Activated naive CD4-positive, alpha-beta T cell treated with anti-CD3 and anti-CD28 coated beads for 36 hours (primary cell): ENCODE measurements at regions of chr7 and their contacts with region 1.

Region 1: GRCh38 chr7:158655931-158656441 is 48.6 kb downstream of the NCAPG2 start:
- DNase-seq: peak; percentile 90
- H3K4me3 Mint-ChIP-seq: no peak overlapping the region
- H3K27ac Mint-ChIP-seq: peak overlapping the region; percentile 84
- H3K4me1 Mint-ChIP-seq: peaks cover 21% of the 10 kb centered on the region
- H3K27me3 Mint-ChIP-seq: no peaks in the 10 kb centered on the region

Region 2: GRCh38 chr7:158704704-158705468 is 48.9 kb after region 1 on chr7 and contains the start of gene NCAPG2:
- CTCF ChIA-PET with region 1: interaction called, 3 read pairs
- intact Hi-C with region 1: loop called (anchors 1 kb)
- DNase-seq: peak; percentile 98
- H3K4me3 Mint-ChIP-seq: peak within 1 kb of the TSS; percentile 82
- H3K27ac Mint-ChIP-seq: peak within 1 kb of the TSS; percentile 85
- H3K4me1 Mint-ChIP-seq: peaks cover 38% of the 10 kb centered on the region
- H3K27me3 Mint-ChIP-seq: no peaks in the 10 kb centered on the region
- total RNA-seq, gene NCAPG2: 145 to 149 TPM